B cell (primary cell): ENCODE measurements at regions of chr1 and their contacts with region 1.

Region 1: GRCh38 chr1:27192039-27192529 is 37.2 kb upstream of the SLC9A1 start:
- DNase-seq: no peak
- ATAC-seq: no peak
- H3K4me3 ChIP-seq: no peak overlapping the region
- H3K4me3 Mint-ChIP-seq: no peak overlapping the region
- H3K27ac ChIP-seq: no peak overlapping the region
- H3K27ac Mint-ChIP-seq: no peak overlapping the region
- H3K4me1 ChIP-seq: no peaks in the 10 kb centered on the region
- H3K4me1 Mint-ChIP-seq: no peaks in the 10 kb centered on the region
- H3K27me3 ChIP-seq: no peaks in the 10 kb centered on the region
- H3K27me3 Mint-ChIP-seq: no peaks in the 10 kb centered on the region
- CTCF ChIP-seq: no peak

Region 2: GRCh38 chr1:26970810-26971209 is 221.3 kb before region 1 on chr1:
- CTCF ChIA-PET with region 1: no interaction called
- POLR2A ChIA-PET with region 1: no interaction called
- intact Hi-C with region 1: no loop called
- DNase-seq: no peak
- ATAC-seq: no peak
- H3K4me3 ChIP-seq: no peak overlapping the region
- H3K4me3 Mint-ChIP-seq: no peak overlapping the region
- H3K27ac ChIP-seq: no peak overlapping the region
- H3K27ac Mint-ChIP-seq: no peak overlapping the region
- H3K4me1 ChIP-seq: no peaks in the 10 kb centered on the region
- H3K4me1 Mint-ChIP-seq: no peaks in the 10 kb centered on the region
- H3K27me3 ChIP-seq: peaks cover 0 to 15% (median 1%) of the 10 kb centered on the region in 4 experiments
- H3K27me3 Mint-ChIP-seq: peaks cover 25% of the 10 kb centered on the region
- CTCF ChIP-seq: no peak

Region 3: GRCh38 chr1:27097484-27097917 is 94.6 kb before region 1 on chr1:
- CTCF ChIA-PET with region 1: interaction called, 33 read pairs
- POLR2A ChIA-PET with region 1: no interaction called
- intact Hi-C with region 1: no loop called
- DNase-seq: peak; percentile 81
- ATAC-seq: peak; percentile 48
- H3K4me3 ChIP-seq: no peak overlapping the region
- H3K4me3 Mint-ChIP-seq: no peak overlapping the region
- H3K27ac ChIP-seq: no peak overlapping the region
- H3K27ac Mint-ChIP-seq: peak overlapping the region; percentile 53
- H3K4me1 ChIP-seq: peaks cover 12 to 23% of the 10 kb centered on the region in 2 donors
- H3K4me1 Mint-ChIP-seq: peaks cover 20% of the 10 kb centered on the region
- H3K27me3 ChIP-seq: no peaks in the 10 kb centered on the region
- H3K27me3 Mint-ChIP-seq: no peaks in the 10 kb centered on the region
- CTCF ChIP-seq: peak; percentile 95

Region 4: DNA sequence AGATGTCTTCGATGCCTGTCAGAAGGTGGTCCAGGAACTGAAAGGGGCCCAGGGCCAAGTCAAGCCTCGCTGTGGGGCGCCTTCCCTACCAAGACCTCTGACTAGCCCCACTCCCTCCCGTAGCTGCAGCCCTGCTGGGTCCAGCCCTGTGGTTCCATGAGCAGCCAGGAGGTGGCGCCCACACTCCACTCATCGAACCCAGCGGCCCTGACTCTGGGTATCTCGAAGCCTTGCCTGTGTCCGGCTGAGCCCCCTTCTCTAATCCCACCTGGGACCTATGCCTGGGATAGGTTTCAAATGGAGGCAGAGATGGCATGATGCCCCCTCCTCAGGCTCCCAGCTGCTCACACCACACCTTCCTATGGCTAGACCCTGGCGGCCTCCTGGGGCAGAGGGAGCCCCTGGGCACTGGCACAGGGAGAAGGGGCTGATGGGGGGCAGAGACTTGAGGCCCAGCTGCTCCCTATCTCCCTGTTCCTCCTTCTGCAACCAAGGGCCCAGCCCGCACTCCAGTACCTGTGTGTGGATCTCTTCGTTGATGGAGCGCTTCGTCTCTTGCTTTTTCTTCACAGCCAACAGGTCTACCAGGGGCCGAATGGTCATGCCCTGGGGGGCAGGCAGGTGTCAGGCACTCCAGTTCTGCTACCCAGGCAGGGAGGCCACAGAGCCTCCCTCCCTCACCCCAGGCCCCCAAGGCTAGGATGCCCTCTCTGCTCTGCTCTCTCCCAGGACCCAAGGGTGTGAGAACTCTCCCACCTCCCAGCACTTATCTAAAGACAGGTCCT is 89.2 kb before region 1 on chr1:
- CTCF ChIA-PET with region 1: interaction called, 33 read pairs
- POLR2A ChIA-PET with region 1: no interaction called
- intact Hi-C with region 1: no loop called
- DNase-seq: peak; percentile 85
- ATAC-seq: peak; percentile 46
- H3K4me3 ChIP-seq: no peak overlapping the region
- H3K4me3 Mint-ChIP-seq: no peak overlapping the region
- H3K27ac ChIP-seq: no peak overlapping the region
- H3K27ac Mint-ChIP-seq: peak overlapping the region; percentile 77
- H3K4me1 ChIP-seq: peaks cover 24 to 41% of the 10 kb centered on the region in 2 donors
- H3K4me1 Mint-ChIP-seq: peaks cover 37% of the 10 kb centered on the region
- H3K27me3 ChIP-seq: no peaks in the 10 kb centered on the region
- H3K27me3 Mint-ChIP-seq: no peaks in the 10 kb centered on the region
- CTCF ChIP-seq: peak; percentile 92

Region 5: GRCh38 chr1:27111626-27112573 is 80.2 kb before region 1 on chr1:
- CTCF ChIA-PET with region 1: interaction called, 20 read pairs
- POLR2A ChIA-PET with region 1: no interaction called
- intact Hi-C with region 1: no loop called
- DNase-seq: peak; percentile 74
- ATAC-seq: peak; percentile 98
- H3K4me3 ChIP-seq: no peak overlapping the region
- H3K4me3 Mint-ChIP-seq: no peak overlapping the region
- H3K27ac ChIP-seq: peak overlapping the region; percentile 4 to 65
- H3K27ac Mint-ChIP-seq: peak overlapping the region; percentile 85
- H3K4me1 ChIP-seq: peaks cover 13 to 26% of the 10 kb centered on the region in 2 donors
- H3K4me1 Mint-ChIP-seq: peaks cover 27% of the 10 kb centered on the region
- H3K27me3 ChIP-seq: no peaks in the 10 kb centered on the region
- H3K27me3 Mint-ChIP-seq: no peaks in the 10 kb centered on the region
- CTCF ChIP-seq: peak; percentile 26